ENCODE measurements at regions of chr16 and their contacts with region 1.

Region 1: GRCh38 chr16:89171463-89172170 is at the start of gene CDH15:
- DNase-seq: peak; percentile 97
- ATAC-seq: peak; percentile 95
- H3K4me3 ChIP-seq: peak within 1 kb of the TSS in 4 of 5 experiments; percentile 31 to 51 (median 38)
- H3K4me3 Mint-ChIP-seq: peak within 1 kb of the TSS; percentile 59
- H3K27ac ChIP-seq: no peak within 1 kb of the TSS
- H3K27ac Mint-ChIP-seq: peak within 1 kb of the TSS; percentile 62
- H3K4me1 ChIP-seq: peaks cover 28 to 40% of the 10 kb centered on the region in 2 donors
- H3K4me1 Mint-ChIP-seq: peaks cover 18% of the 10 kb centered on the region
- H3K27me3 ChIP-seq: peaks cover 0 to 31% (median 13%) of the 10 kb centered on the region in 4 experiments
- H3K27me3 Mint-ChIP-seq: peaks cover 4% of the 10 kb centered on the region
- CTCF ChIP-seq: no peak
- total RNA-seq, gene CDH15: not detected in 2 replicates

Region 2: GRCh38 chr16:88437373-88437964 is 734.1 kb before region 1 on chr16:
- CTCF ChIA-PET with region 1: no interaction called
- POLR2A ChIA-PET with region 1: no interaction called
- intact Hi-C with region 1: no loop called
- DNase-seq: peak; percentile 79
- ATAC-seq: peak; percentile 82
- H3K4me3 ChIP-seq: no peak overlapping the region
- H3K4me3 Mint-ChIP-seq: no peak overlapping the region
- H3K27ac ChIP-seq: no peak overlapping the region
- H3K27ac Mint-ChIP-seq: no peak overlapping the region
- H3K4me1 ChIP-seq: no peaks in the 10 kb centered on the region
- H3K4me1 Mint-ChIP-seq: no peaks in the 10 kb centered on the region
- H3K27me3 ChIP-seq: no peaks in the 10 kb centered on the region
- H3K27me3 Mint-ChIP-seq: no peaks in the 10 kb centered on the region
- CTCF ChIP-seq: peak; percentile 87

Region 3: GRCh38 chr16:88650749-88651275 is 520.8 kb before region 1 on chr16 and contains the start of gene CYBA:
- CTCF ChIA-PET with region 1: no interaction called
- POLR2A ChIA-PET with region 1: no interaction called
- intact Hi-C with region 1: loop called (anchors 1 kb)
- DNase-seq: peak; percentile 92
- ATAC-seq: peak; percentile 77
- H3K4me3 ChIP-seq: peak within 1 kb of the TSS; percentile 73 to 98 (median 92)
- H3K4me3 Mint-ChIP-seq: peak within 1 kb of the TSS; percentile 96
- H3K27ac ChIP-seq: peak within 1 kb of the TSS; percentile 98 to 99
- H3K27ac Mint-ChIP-seq: peak within 1 kb of the TSS; percentile 98
- H3K4me1 ChIP-seq: peaks cover 46 to 65% of the 10 kb centered on the region in 2 donors
- H3K4me1 Mint-ChIP-seq: peaks cover 43% of the 10 kb centered on the region
- H3K27me3 ChIP-seq: no peaks in the 10 kb centered on the region
- H3K27me3 Mint-ChIP-seq: no peaks in the 10 kb centered on the region
- CTCF ChIP-seq: no peak
- total RNA-seq, gene CYBA: 698 and 701 TPM in 2 replicates

Region 4: GRCh38 chr16:88811769-88812512 is 359.7 kb before region 1 on chr16 and contains the start of gene APRT:
- CTCF ChIA-PET with region 1: interaction called, 7 read pairs
- POLR2A ChIA-PET with region 1: interaction called, 4 read pairs
- intact Hi-C with region 1: loop called (anchors 1 kb)
- DNase-seq: peak; percentile 97
- ATAC-seq: peak; percentile 87
- H3K4me3 ChIP-seq: peak within 1 kb of the TSS; percentile 45 to 90 (median 77)
- H3K4me3 Mint-ChIP-seq: peak within 1 kb of the TSS; percentile 98
- H3K27ac ChIP-seq: peak within 1 kb of the TSS; percentile 61 to 65
- H3K27ac Mint-ChIP-seq: peak within 1 kb of the TSS; percentile 99
- H3K4me1 ChIP-seq: peaks cover 11 to 27% of the 10 kb centered on the region in 2 donors
- H3K4me1 Mint-ChIP-seq: peaks cover 19% of the 10 kb centered on the region
- H3K27me3 ChIP-seq: no peaks in the 10 kb centered on the region
- H3K27me3 Mint-ChIP-seq: no peaks in the 10 kb centered on the region
- CTCF ChIP-seq: no peak
- total RNA-seq, gene APRT: 111 and 124 TPM in 2 replicates

Region 5: DNA sequence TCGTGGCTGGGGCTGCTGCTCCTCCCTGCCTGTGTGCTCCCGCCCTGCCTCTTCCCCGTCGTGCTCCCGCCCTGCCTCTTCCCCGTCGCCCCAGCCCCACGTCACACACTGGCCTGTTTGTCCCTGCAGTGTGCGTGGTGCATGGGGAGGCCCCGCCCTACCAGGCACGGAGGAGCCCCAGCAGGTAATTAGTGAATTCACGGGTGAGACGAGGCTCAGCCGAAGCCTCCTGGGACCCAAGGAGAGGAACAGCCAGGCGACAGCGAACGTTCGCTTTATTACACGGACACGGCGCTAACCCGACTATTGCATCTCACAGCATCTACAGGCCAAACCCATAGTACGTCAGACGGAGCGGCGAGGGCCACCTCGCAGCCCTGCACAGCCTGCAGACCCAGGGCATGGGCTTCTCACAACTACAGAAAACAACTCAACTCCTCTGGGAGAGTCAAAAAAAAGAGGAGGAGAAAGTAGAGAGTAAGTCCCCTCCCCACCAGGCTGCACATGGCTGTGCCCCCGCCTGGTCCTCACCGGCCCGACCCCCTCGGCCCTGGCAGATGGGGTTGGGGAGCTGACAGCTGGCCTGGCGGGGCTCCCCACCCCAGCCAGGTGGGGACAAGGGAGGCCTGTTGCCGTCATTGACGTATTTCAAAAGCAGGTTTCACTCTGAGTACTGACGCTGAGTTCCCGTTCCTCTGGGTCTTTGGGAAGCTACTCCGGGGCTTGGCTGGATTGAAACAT is 300.8 kb before region 1 on chr16:
- CTCF ChIA-PET with region 1: no interaction called
- POLR2A ChIA-PET with region 1: no interaction called
- intact Hi-C with region 1: no loop called
- DNase-seq: peak; percentile 42
- ATAC-seq: peak; percentile 53
- H3K4me3 ChIP-seq: peak overlapping the region in 4 of 5 experiments; percentile 5 to 30 (median 20)
- H3K4me3 Mint-ChIP-seq: peak overlapping the region; percentile 74
- H3K27ac ChIP-seq: no peak overlapping the region
- H3K27ac Mint-ChIP-seq: peak overlapping the region; percentile 61
- H3K4me1 ChIP-seq: peaks cover 13 to 19% of the 10 kb centered on the region in 2 donors
- H3K4me1 Mint-ChIP-seq: peaks cover 11% of the 10 kb centered on the region
- H3K27me3 ChIP-seq: peaks cover 0 to 34% (median 4%) of the 10 kb centered on the region in 4 experiments
- H3K27me3 Mint-ChIP-seq: peaks cover 10% of the 10 kb centered on the region
- CTCF ChIP-seq: no peak

Region 6: DNA sequence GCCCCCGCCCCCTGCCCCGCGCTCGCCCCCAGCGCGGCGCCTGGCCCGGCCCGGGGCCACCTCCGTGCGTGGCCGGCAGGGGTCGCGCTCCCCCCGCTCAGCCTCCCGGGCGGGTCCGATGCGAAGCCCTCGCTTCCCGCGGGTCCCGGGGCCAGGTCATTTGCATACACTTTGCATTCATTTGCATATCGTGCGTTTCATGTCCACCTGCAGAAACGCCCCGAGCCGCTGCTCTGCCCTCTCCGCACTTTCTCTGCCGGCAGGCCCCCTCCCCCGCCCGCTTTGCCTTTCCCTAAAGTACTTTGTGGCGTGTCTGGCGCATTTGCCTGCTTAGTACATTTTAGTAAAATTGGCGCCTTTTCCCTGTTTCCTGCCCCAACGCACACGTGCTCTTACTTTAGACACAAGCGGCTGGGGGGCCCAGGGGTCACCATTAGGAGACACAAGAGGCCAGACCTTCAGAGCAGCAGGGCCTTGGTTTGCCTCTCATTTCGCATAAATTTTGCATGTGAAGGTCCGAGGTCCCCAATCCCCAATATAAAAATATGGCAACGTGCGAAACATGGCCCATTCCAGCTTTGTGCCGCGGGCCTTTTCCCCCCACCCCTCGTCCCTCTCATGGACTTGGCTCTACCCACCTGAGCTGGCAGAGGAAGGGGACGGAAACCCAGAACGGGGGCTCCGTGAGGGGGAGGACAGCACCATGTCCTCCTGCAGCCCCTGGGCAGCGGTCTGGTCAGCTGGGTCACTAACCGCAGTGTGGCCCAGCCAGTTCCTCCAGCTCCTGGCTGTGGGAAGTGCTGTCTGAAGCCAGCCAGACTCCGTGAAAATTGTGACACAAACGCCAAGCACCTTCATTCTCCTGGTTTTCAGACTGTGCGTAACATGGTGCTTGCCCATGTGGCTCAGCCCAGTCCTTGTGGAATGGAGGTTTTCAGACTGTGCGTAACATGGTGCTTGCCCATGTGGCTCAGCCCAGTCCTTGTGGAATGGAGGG is 229.4 kb before region 1 on chr16:
- CTCF ChIA-PET with region 1: interaction called, 12 read pairs
- POLR2A ChIA-PET with region 1: interaction called, 4 read pairs
- intact Hi-C with region 1: loop called (anchors 1 kb)
- DNase-seq: peak; percentile 85
- ATAC-seq: peak; percentile 67
- H3K4me3 ChIP-seq: peak overlapping the region in 4 of 5 experiments; percentile 22 to 46 (median 30)
- H3K4me3 Mint-ChIP-seq: peak overlapping the region; percentile 78
- H3K27ac ChIP-seq: no peak overlapping the region
- H3K27ac Mint-ChIP-seq: peak overlapping the region; percentile 81
- H3K4me1 ChIP-seq: peaks cover 29 to 39% of the 10 kb centered on the region in 2 donors
- H3K4me1 Mint-ChIP-seq: peaks cover 44% of the 10 kb centered on the region
- H3K27me3 ChIP-seq: no peaks in the 10 kb centered on the region
- H3K27me3 Mint-ChIP-seq: no peaks in the 10 kb centered on the region
- CTCF ChIP-seq: peak; percentile 86

Region 7: DNA sequence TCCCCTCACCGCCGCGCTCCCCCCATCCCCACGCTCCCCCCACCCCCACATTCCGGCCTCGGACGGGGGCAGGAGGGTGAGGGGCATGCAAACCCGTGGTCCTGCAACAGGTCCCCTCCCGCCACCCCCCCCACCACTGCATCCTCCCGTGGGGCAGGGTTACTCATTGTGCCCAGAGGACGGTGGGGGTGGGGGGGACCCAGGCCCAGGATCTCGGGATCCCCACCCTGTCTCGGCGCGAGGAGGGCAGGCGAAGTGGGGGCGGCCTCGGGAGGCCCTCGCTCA is 20.2 kb after region 1 on chr16:
- CTCF ChIA-PET with region 1: no interaction called
- POLR2A ChIA-PET with region 1: no interaction called
- intact Hi-C with region 1: loop called (anchors 1 kb)
- DNase-seq: no peak
- ATAC-seq: no peak
- H3K4me3 ChIP-seq: peak overlapping the region in 3 of 5 experiments; percentile 44 to 52 (median 52)
- H3K4me3 Mint-ChIP-seq: no peak overlapping the region
- H3K27ac ChIP-seq: no peak overlapping the region
- H3K27ac Mint-ChIP-seq: no peak overlapping the region
- H3K4me1 ChIP-seq: no peaks in the 10 kb centered on the region
- H3K4me1 Mint-ChIP-seq: peaks cover 3% of the 10 kb centered on the region
- H3K27me3 ChIP-seq: peaks cover 0 to 3% (median 0%) of the 10 kb centered on the region in 4 experiments
- H3K27me3 Mint-ChIP-seq: no peaks in the 10 kb centered on the region
- CTCF ChIP-seq: no peak

Region 8: DNA sequence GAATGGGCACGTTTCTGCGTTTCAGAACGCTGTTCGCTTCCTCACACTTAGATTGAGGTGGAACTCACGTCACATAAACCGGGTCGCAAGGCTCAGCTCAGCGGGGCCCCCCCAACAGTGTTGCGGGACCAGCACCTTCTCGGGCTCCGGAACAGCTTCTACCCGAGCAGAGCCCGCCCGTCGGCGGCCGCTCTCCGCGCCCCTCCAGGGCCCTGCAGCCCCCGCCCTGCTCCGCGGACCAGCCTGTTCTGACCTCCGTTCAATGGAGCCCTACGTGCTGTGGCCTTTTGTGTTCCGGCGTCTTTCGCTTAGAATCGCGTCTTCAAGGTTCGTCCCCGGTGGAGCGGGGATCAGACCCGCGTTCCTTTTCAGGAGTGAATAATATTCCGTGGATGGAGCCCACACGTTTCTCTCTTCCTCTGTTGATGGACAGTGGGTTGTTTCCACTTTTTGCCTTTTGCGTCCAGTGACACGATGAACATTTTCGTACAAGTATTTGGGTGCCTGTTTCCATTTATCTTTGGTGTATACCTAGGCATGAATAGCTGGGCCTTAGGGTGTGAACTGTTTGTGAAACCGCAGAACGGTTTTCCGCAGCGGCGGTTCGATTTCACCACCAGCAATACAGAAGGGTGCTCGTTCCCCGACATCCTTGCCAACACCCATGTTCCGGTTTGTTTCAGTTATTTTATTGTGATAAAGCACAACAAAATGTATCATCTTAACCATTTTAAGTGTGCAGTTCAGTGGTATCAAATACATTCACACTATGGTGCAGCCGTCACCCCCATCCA is 31.0 kb after region 1 on chr16:
- CTCF ChIA-PET with region 1: no interaction called
- POLR2A ChIA-PET with region 1: no interaction called
- intact Hi-C with region 1: no loop called
- DNase-seq: no peak
- ATAC-seq: no peak
- H3K4me3 ChIP-seq: no peak overlapping the region
- H3K4me3 Mint-ChIP-seq: peak overlapping the region; percentile 76
- H3K27ac ChIP-seq: no peak overlapping the region
- H3K27ac Mint-ChIP-seq: peak overlapping the region; percentile 26
- H3K4me1 ChIP-seq: peaks cover 15% of the 10 kb centered on the region in 2 donors
- H3K4me1 Mint-ChIP-seq: peaks cover 13% of the 10 kb centered on the region
- H3K27me3 ChIP-seq: peaks cover 0 to 50% (median 25%) of the 10 kb centered on the region in 4 experiments
- H3K27me3 Mint-ChIP-seq: peaks cover 34% of the 10 kb centered on the region
- CTCF ChIP-seq: no peak